ENCODE measurements at regions of chrX and their contacts with region 1.

Region 1: DNA sequence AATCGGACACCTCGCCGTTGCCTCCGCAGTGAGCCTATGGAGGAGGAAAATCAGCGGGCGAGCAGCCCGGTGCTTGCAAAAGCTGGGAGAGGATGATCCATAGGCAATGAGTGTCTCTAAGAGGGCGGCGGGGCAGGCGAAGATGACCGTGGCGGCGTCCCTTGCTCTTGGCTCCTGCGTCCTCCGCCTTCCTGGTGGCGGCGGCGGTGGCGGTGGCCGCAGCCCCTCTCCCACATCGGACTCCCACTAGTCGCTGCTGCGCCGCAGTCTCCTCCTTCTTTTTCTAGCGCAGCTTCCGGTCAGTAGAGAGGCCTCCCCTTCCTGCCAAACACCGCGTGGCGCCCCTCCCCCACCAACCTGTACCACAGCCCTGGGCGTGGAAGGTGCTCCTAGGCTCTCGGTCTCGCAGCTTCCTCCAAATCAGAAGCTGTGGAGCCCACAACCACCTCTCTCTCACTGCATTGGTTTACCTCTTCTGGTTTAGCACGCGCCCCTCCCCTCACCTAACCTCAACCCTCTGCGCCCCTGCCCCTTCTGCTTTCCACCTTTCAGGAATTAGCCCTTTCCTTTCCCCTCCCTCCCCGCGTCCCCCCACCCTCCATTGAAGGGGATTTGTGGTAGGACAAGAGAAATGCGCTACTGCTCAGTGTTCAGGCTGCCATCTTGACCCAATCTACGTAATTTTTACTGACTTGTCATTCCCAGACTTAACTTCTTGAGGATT is at the start of gene SPIN3:
- DNase-seq: peak; percentile 80
- ATAC-seq: peak; percentile 95
- H3K4me3 Mint-ChIP-seq: peak within 1 kb of the TSS; percentile 84
- H3K27ac Mint-ChIP-seq: peak within 1 kb of the TSS; percentile 92
- H3K4me1 Mint-ChIP-seq: peaks cover 30% of the 10 kb centered on the region
- H3K27me3 Mint-ChIP-seq: no peaks in the 10 kb centered on the region
- total RNA-seq, gene SPIN3: 7.7 to 10.0 TPM

Region 2: GRCh38 chrX:57121162-57121741 is 125.8 kb after region 1 on chrX and contains the start of gene SPIN2B:
- CTCF ChIA-PET with region 1: no interaction called
- POLR2A ChIA-PET with region 1: no interaction called
- intact Hi-C with region 1: loop called in 1 of 2 experiments (anchors 5 kb)
- DNase-seq: peak; percentile 89
- ATAC-seq: peak; percentile 100
- H3K4me3 Mint-ChIP-seq: peak within 1 kb of the TSS; percentile 85
- H3K27ac Mint-ChIP-seq: peak within 1 kb of the TSS; percentile 90
- H3K4me1 Mint-ChIP-seq: peaks cover 10% of the 10 kb centered on the region
- H3K27me3 Mint-ChIP-seq: no peaks in the 10 kb centered on the region
- total RNA-seq, gene SPIN2B: 6.1 to 7.0 TPM

Region 3: GRCh38 chrX:57445046-57445445 is 449.6 kb after region 1 on chrX:
- CTCF ChIA-PET with region 1: no interaction called
- POLR2A ChIA-PET with region 1: no interaction called
- intact Hi-C with region 1: no loop called
- DNase-seq: no peak
- ATAC-seq: no peak
- H3K4me3 Mint-ChIP-seq: no peak overlapping the region
- H3K27ac Mint-ChIP-seq: no peak overlapping the region
- H3K4me1 Mint-ChIP-seq: no peaks in the 10 kb centered on the region
- H3K27me3 Mint-ChIP-seq: no peaks in the 10 kb centered on the region

Measured in activated CD4-positive, alpha-beta T cell treated with anti-CD3 and anti-CD28 coated beads for 36 hours (primary cell).